Adrenal gland (tissue), 19 donors: ENCODE measurements at regions of chr15 and their contacts with region 1.

Region 1: DNA sequence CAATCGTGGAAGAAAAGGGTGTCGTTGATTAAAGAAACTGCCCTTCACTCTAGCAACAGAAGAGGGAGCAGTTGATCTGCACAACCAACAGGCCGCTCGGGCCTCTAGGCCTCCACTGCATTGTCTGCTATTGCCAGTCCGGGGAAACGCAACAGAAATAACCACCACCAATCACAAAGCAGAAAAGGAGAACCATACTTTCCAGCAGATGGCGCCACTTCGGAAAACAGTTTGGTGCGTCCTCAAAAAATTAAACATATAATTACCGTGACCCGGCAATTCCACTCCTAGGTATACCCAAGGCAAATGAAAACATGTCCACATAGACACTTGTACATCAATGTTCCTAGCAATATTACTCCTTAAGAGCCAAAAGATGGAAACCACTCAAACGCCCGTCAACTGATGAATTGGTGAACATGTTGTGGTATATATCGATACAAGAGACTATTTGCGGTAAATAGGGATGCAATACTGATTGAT is 154.1 kb downstream of the TJP1 start:
- DNase-seq: peak; percentile 64 to 88 (median 86)
- H3K4me3 ChIP-seq: no peak overlapping the region
- H3K27ac ChIP-seq: no peak overlapping the region
- H3K4me1 ChIP-seq: no peaks in the 10 kb centered on the region
- H3K27me3 ChIP-seq: no peaks in the 10 kb centered on the region
- CTCF ChIP-seq: peak; percentile 69 to 88 (median 80)
- POLR2A ChIP-seq: no peak

Region 2: GRCh38 chr15:30073915-30074314 is 405.8 kb after region 1 on chr15:
- intact Hi-C with region 1: loop called in 1 of 2 experiments (anchors 10 kb)
- DNase-seq: no peak
- H3K4me3 ChIP-seq: no peak overlapping the region
- H3K27ac ChIP-seq: no peak overlapping the region
- H3K4me1 ChIP-seq: no peaks in the 10 kb centered on the region
- H3K27me3 ChIP-seq: no peaks in the 10 kb centered on the region
- CTCF ChIP-seq: no peak
- POLR2A ChIP-seq: no peak